Activated T-helper 2 cell treated with anti-CD3 and anti-CD28 coated beads, Interferon-gamma antibody, Interleukin-2, Interleukin-4, amounts not matched to agents 10 μg/mL and 5 μg/mL and 100 μg/mL, durations not matched to agents 14 hours and 24 hours and 36 hours (primary cell): ENCODE measurements at regions of chr3 and their contacts with region 1.

Region 1: DNA sequence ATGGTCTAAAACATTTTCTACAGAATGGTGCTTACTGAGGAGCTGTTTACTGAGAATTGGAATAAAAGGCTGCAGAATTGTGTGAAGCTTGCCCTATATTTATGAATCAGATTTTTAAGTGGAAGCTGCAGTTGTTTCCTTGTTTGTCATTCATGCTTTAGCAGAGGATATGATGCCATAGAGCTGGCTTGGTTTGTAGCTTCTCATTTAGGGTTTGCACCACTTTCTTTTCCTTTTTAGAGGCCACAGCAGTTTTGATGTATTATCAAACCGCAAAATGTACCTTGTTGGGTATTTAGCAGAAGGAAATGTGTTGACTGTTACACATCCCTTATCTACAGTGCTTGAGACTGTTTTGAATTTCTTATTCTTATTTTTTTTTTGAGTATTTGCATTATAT is 66.2 kb downstream of the RASA2 start:
- DNase-seq: no peak
- H3K4me3 Mint-ChIP-seq: no peak overlapping the region
- H3K27ac Mint-ChIP-seq: peak overlapping the region; percentile 94
- H3K4me1 Mint-ChIP-seq: peaks cover 48% of the 10 kb centered on the region
- H3K27me3 Mint-ChIP-seq: no peaks in the 10 kb centered on the region

Region 2: DNA sequence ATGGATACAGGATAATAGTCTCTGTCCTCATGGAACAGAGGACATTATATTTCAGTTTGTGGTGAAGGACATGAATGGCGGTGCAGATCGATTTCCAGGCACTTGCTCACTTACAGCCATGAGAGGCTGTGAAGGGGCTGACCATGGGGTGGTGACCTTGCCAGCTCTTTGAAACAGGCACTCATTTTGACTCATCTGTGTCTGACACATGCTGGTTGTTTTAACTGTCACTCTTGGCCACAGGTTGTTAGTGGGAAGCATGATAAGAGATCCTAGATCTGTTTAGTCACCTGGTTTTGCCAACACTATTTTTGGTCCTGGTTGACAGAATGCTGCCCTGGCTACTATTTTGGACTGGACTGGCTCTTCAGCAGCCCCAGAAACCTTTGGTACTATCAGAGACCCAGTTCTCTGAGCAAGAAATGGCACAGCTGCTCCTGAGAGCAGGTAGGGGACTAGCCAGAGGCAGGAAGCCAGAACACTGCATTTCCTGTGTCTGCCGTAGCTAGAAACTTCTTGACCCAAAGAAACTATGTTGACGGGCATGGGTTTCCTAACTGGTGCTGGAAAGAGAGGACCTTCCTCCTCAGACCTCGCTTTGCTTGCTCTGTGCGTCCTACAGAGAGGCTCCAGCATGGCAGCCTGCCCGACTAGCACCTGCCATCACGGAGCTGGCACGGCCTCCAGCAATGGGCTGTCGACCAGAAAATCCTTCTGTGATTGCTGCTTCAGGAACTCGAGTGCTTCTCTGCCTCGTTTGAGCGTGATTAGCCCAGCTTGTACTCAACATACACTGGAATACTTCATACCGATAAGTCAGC is 315.1 kb before region 1 on chr3:
- intact Hi-C with region 1: loop called (anchors 2 kb)
- DNase-seq: no peak
- H3K4me3 Mint-ChIP-seq: peak overlapping the region; percentile 43
- H3K27ac Mint-ChIP-seq: peak overlapping the region; percentile 82
- H3K4me1 Mint-ChIP-seq: peaks cover 84% of the 10 kb centered on the region
- H3K27me3 Mint-ChIP-seq: no peaks in the 10 kb centered on the region

Region 3: GRCh38 chr3:141370065-141370533 is 183.0 kb before region 1 on chr3:
- intact Hi-C with region 1: loop called (anchors 2 kb)
- DNase-seq: peak; percentile 58
- H3K4me3 Mint-ChIP-seq: no peak overlapping the region
- H3K27ac Mint-ChIP-seq: peak overlapping the region; percentile 40
- H3K4me1 Mint-ChIP-seq: peaks cover 27% of the 10 kb centered on the region
- H3K27me3 Mint-ChIP-seq: no peaks in the 10 kb centered on the region

Region 4: DNA sequence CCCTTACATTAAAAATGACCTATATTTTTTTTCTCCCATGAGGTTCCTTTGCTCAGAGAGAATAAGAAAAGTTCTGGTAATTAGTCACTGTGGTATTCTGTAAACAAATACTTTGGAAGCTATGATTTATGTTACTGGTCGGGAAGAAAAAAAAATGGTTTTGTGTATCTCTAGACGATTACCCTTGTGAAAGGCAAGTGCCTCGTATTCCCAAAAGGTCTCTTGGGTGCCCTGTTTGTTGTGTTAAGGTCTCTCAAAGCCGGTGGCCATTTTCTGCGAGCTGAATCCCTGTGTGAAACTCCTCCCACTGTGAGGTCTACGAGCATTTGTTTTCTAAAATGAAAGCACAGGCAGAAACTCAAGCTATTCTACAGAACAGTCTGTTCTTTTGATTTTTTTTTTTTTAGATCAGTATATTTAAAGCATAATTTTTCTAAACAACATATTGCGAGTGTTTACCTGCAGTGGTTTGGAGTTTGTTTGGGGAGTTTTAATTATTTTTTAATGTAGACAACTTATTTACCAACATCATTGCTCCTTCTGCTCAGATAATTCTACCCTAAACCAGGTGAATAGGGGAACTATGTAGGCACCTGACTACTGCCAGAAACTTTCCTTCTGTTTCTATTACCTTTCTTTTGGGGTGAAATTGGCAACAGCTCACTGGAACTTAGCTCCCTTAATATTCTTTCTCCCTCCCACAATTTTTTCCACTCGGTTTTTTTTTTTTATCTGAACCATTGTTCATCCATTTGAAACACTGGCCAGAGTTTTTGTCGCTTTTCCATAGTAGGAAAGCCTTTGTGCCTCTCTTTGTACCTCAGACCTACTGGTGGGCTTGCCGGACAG is 140.7 kb before region 1 on chr3:
- intact Hi-C with region 1: loop called (anchors 2 kb)
- DNase-seq: peak; percentile 57
- H3K4me3 Mint-ChIP-seq: peak overlapping the region; percentile 76
- H3K27ac Mint-ChIP-seq: peak overlapping the region; percentile 98
- H3K4me1 Mint-ChIP-seq: peaks cover 64% of the 10 kb centered on the region
- H3K27me3 Mint-ChIP-seq: no peaks in the 10 kb centered on the region

Region 5: GRCh38 chr3:141487521-141488252 is 65.4 kb before region 1 on chr3:
- intact Hi-C with region 1: loop called (anchors 1 kb)
- DNase-seq: peak; percentile 86
- H3K4me3 Mint-ChIP-seq: peak overlapping the region; percentile 91
- H3K27ac Mint-ChIP-seq: peak overlapping the region; percentile 95
- H3K4me1 Mint-ChIP-seq: peaks cover 56% of the 10 kb centered on the region
- H3K27me3 Mint-ChIP-seq: no peaks in the 10 kb centered on the region

Region 6: GRCh38 chr3:141498598-141499223 is 54.3 kb before region 1 on chr3:
- intact Hi-C with region 1: loop called (anchors 1 kb)
- DNase-seq: peak; percentile 90
- H3K4me3 Mint-ChIP-seq: peak overlapping the region; percentile 43
- H3K27ac Mint-ChIP-seq: peak overlapping the region; percentile 82
- H3K4me1 Mint-ChIP-seq: peaks cover 66% of the 10 kb centered on the region
- H3K27me3 Mint-ChIP-seq: no peaks in the 10 kb centered on the region

Region 7: DNA sequence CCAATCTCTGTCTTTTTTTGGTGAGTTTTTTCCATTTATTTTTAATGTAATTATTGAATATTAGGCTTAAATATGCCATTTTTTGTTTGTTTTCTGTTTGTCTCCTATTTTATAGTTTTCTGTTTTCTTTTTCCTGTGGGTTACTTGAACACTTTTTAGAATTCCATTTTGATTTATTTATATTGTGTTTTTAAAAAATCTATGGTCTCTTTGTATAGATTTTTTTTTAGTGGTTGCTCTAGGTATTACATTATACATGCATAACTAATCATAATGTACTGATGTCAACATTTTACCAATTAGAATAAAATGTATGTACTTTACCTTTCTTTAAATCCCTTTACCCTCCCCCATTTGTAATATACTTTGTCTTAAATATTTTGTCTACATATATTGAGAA is 10.1 kb before region 1 on chr3:
- intact Hi-C with region 1: loop called (anchors 1 kb)
- DNase-seq: no peak
- H3K4me3 Mint-ChIP-seq: peak overlapping the region; percentile 10
- H3K27ac Mint-ChIP-seq: peak overlapping the region; percentile 77
- H3K4me1 Mint-ChIP-seq: peaks cover 46% of the 10 kb centered on the region
- H3K27me3 Mint-ChIP-seq: no peaks in the 10 kb centered on the region

Region 8: DNA sequence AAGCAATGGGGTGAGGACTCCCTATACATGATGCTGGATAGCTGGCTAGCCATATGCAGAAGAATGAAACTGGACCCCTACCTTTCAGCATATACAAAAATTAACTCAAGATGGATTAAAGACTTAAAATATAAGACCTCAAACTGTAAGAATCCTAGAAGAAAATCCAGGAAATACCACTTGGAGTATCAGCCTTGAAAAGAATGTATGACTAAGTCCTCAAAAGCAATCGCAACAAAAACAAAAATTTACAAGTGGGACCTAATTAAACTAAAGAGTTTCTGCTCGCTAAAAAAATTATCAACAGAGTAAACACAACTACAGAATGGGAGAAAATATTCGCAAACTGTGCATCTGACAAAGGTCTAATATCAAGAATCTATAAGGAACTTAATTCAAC is 800.5 kb after region 1 on chr3:
- intact Hi-C with region 1: no loop called
- DNase-seq: no peak
- H3K4me3 Mint-ChIP-seq: no peak overlapping the region
- H3K27ac Mint-ChIP-seq: no peak overlapping the region
- H3K4me1 Mint-ChIP-seq: no peaks in the 10 kb centered on the region
- H3K27me3 Mint-ChIP-seq: no peaks in the 10 kb centered on the region